Activated naive CD4-positive, alpha-beta T cell treated with anti-CD3 and anti-CD28 coated beads for 36 hours (primary cell): ENCODE measurements at regions of chr5 and their contacts with region 1.

Region 1: GRCh38 chr5:141524604-141525597 is 36.0 kb downstream of the PCDHGC5 start:
- DNase-seq: peak; percentile 57
- H3K4me3 Mint-ChIP-seq: no peak overlapping the region
- H3K27ac Mint-ChIP-seq: no peak overlapping the region
- H3K4me1 Mint-ChIP-seq: peaks cover 32% of the 10 kb centered on the region
- H3K27me3 Mint-ChIP-seq: no peaks in the 10 kb centered on the region

Region 2: DNA sequence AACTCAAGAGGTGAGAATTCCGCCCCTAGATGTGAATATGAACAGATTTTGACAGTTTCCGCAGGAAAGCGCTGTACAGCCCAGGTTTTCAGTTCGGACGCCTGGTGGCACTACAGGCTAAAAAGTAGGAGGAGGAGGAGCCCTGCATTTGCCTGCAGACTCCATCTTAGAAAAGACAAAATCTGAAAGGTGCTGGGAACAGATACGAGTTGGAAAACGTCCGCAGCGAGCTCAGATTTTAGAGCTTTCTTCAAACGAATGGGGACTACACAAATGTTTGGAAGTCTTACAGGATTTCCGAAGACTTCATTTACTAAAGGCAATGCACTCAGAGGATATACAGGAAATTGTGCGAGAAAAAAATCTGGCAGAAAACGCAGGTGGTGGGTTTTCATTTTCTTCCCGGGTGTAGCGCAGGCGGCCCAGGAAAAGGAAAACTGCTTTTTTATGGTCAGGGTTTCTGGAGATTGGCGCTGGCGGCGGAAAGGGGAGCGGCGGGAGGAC is 440.4 kb before region 1 on chr5:
- CTCF ChIA-PET with region 1: no interaction called
- intact Hi-C with region 1: loop called (anchors 10 kb)
- DNase-seq: peak; percentile 77
- H3K4me3 Mint-ChIP-seq: peak overlapping the region; percentile 85
- H3K27ac Mint-ChIP-seq: no peak overlapping the region
- H3K4me1 Mint-ChIP-seq: peaks cover 6% of the 10 kb centered on the region
- H3K27me3 Mint-ChIP-seq: peaks cover 23% of the 10 kb centered on the region

Region 3: DNA sequence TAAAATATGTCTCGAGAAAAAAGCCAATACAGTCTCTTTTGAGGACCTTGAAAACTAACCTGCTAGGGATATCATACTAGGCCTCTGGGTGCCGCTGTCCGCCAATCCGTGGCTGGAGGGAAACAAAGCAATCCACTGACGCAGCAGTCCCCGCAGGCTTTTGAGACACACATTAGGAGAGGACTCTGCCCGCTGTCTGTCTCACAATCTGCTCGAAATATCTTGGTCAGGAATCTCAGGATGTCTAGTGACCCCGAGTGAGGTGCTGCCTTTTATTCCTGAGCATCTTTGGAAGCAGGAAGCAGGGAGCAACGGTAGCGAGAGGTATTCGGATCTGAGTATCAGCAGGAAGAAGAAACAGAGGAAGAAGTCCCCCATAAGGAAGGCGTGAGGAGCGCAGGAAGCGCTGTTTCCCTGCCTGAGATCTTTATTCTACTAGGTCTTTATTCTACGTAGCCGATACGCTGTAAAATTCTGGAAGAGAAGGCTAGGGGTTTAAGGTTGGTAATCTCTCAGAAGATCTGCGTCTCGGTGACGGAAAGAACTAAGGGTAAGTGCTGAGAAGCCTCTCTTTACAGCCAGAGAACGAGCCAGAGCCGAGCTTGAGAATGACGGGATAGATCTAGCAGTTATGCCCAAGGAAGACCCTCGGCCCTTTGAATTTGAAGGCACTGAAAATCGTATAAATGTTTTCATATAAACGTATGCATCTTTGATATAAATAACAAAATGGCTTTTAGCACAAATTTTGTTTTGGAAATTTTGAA is 198.6 kb before region 1 on chr5:
- CTCF ChIA-PET with region 1: interaction called, 4 read pairs
- intact Hi-C with region 1: loop called (anchors 1 kb)
- DNase-seq: peak; percentile 82
- H3K4me3 Mint-ChIP-seq: peak overlapping the region; percentile 82
- H3K27ac Mint-ChIP-seq: no peak overlapping the region
- H3K4me1 Mint-ChIP-seq: peaks cover 2% of the 10 kb centered on the region
- H3K27me3 Mint-ChIP-seq: peaks cover 24% of the 10 kb centered on the region

Region 4: GRCh38 chr5:141420855-141421496 is 103.9 kb before region 1 on chr5 and contains the start of gene PCDHGA11:
- CTCF ChIA-PET with region 1: interaction called, 14 read pairs
- intact Hi-C with region 1: loop called (anchors 1 kb)
- DNase-seq: peak; percentile 71
- H3K4me3 Mint-ChIP-seq: peak within 1 kb of the TSS; percentile 77
- H3K27ac Mint-ChIP-seq: no peak within 1 kb of the TSS
- H3K4me1 Mint-ChIP-seq: peaks cover 3% of the 10 kb centered on the region
- H3K27me3 Mint-ChIP-seq: peaks cover 69% of the 10 kb centered on the region
- total RNA-seq, gene PCDHGA11: 0.10 to 0.17 TPM

Region 5: DNA sequence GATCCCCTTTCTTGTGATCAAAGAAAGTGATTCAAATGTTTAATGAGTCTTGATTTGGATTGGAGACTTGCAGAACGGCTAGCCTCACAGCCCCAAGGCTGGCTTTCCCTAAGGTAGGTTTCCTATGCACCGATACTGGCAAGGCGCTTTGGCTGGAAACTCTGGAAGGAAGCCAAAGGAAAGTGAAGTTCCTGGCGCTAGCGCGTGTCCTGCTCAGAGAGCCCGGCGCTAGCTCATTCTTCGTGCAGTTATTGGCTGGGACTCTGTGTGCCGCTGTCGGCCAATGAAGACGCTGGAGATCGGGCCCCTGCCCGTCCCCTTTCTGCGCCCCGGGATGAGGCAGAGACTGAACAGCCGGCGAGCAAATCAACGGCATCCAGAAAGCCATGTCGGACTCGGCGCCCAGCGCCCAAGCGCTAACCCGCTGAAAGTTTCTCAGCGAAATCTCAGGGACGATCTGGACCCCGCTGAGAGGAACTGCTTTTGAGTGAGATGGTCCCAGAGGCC is 49.2 kb before region 1 on chr5 and contains the start of gene PCDHGC3:
- CTCF ChIA-PET with region 1: interaction called, 9 read pairs
- intact Hi-C with region 1: loop called (anchors 2 kb)
- DNase-seq: peak; percentile 72
- H3K4me3 Mint-ChIP-seq: peak within 1 kb of the TSS; percentile 86
- H3K27ac Mint-ChIP-seq: no peak within 1 kb of the TSS
- H3K4me1 Mint-ChIP-seq: peaks cover 20% of the 10 kb centered on the region
- H3K27me3 Mint-ChIP-seq: peaks cover 50% of the 10 kb centered on the region
- total RNA-seq, gene PCDHGC3: 0.12 to 0.17 TPM